Posterior vena cava (tissue), 2 donors: ENCODE measurements at regions of chr1 and their contacts with region 1.

Region 1: GRCh38 chr1:84442256-84442655 is 36.8 kb upstream of the RPF1 start:
- DNase-seq: no peak

Region 2: GRCh38 chr1:84506002-84506728 is 63.9 kb after region 1 on chr1 and contains the starts of genes GNG5 and SPATA1:
- intact Hi-C with region 1: no loop called
- DNase-seq: peak; percentile 100
- total RNA-seq, gene GNG5: 66.1 to 67.7 TPM
- total RNA-seq, gene SPATA1: 1.0 to 2.6 TPM

Region 3: DNA sequence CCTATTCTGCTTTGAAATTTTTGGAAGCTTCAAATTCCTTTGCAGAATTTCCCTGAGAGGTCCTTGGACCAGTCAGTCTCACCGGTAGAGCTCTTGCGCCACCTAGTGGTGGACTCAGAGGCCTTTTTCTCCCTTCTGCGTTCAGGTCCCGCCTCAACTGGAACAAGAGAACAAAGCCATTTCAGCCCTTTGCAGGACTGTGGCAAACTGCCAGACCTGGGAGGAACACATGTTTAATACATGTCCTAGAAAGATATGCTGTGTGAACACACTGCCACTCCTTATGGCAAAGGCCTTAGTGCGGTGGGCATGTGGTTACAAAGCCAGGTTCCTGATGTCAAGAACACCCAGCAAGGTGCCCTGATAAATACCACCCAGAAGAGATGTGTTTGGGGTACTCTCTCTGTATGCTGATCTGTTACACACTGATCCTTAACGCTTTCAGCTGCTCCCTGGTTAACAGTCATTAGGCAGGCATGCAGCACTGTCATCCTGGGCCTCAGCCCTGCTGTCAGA is 330.2 kb after region 1 on chr1:
- intact Hi-C with region 1: loop called in 1 of 2 experiments (anchors 5 kb)
- DNase-seq: peak; percentile 91